WTC11 (cell line): ENCODE measurements at regions of chr1 and their contacts with region 1.

Region 1: DNA sequence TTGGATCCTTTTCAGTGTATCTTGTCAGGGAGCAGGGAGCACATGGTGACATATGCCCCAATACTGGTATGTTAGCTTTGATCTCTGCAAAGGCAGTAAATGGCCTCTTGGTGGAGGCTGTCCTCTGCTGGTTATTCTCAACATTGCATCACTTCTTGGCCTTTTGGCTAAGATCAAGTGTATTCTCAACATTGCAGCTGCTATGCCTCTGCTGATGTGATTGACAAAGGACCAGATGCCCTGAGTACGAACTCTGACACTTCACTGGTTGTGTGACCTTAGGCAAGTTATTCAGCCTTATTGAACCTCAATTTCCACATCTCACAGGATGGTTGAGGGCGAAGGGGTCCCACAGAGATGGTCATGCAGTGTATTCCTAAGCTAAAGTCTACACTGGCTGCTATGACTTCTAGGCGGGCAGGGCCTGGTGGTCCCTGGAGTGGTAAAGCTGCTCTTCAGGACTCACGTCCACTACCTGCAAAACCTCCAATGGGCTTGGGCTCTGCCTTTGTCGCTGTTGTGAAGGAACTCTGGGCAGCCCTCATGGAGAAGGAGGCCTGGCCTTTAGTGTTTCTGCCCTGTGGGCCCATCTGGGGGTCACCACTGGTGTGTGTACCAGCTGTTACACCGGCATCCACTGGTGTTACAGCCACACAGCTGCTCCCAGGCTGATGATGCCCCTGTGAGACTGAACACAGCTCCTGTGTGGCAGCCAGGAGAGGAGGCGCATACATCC is 64.8 kb downstream of the DNTTIP2 start:
- DNase-seq: peak; percentile 65
- ATAC-seq: peak; percentile 75
- H3K4me3 Mint-ChIP-seq: no peak overlapping the region
- H3K27ac Mint-ChIP-seq: no peak overlapping the region
- H3K4me1 Mint-ChIP-seq: peaks cover 57% of the 10 kb centered on the region
- H3K27me3 Mint-ChIP-seq: no peaks in the 10 kb centered on the region
- CTCF ChIP-seq: peak; percentile 65

Region 2: DNA sequence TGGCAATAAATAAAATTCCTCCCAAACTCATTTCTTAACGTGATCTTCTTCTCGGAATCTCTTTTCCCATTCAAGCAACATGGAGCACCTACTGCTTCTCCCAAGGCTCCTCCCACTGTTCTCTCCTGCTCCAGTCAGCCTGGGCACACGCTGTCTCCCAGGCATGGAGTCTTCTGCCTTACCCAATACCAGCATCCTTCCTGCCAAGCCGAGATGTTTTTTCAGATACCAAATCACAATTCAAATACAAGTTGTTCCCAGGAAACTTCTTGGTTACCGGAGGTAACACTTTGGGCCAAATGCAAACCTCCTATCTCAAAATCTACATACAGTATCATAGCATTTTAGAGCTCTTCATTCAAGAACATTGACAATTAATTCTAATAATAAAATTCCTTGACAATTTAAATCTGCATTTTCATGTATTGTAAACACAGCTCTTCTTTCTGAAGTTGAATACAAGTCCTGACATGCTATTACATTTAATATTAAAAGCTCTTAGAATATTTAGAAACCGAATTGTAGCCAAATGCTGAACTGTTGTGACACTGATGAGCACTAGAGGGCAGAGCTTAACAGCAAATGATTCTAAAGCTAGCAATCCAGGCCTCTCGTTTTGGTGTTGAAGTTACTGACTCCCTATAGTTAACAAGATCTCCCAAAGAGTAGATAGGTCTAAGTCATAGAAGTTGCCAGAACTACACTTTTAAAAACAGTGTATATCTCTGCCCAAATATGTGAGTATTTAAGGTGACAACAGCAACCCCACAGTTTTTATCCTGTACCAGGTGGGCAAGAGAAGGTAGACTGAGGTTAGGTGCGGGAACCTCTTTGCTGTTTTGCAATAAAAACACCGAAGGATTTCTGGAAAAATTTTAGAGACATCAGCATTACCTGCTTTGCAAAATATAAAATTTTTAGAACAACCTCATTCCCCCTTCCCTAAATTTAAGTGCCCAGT is 184.8 kb before region 1 on chr1:
- CTCF ChIA-PET with region 1: interaction called, 240 read pairs
- POLR2A ChIA-PET with region 1: interaction called, 5 read pairs
- DNase-seq: no peak
- ATAC-seq: peak; percentile 76
- H3K4me3 Mint-ChIP-seq: no peak overlapping the region
- H3K27ac Mint-ChIP-seq: peak overlapping the region; percentile 47; the same call in 1 of the 2 replicates
- H3K4me1 Mint-ChIP-seq: peaks cover 7% of the 10 kb centered on the region; the same call in 1 of the 2 replicates
- H3K27me3 Mint-ChIP-seq: no peaks in the 10 kb centered on the region
- CTCF ChIP-seq: peak; percentile 62

Region 3: GRCh38 chr1:93680757-93681550 is 133.3 kb before region 1 on chr1:
- CTCF ChIA-PET with region 1: interaction called, 26 read pairs
- POLR2A ChIA-PET with region 1: no interaction called
- DNase-seq: peak; percentile 89
- ATAC-seq: peak; percentile 90
- H3K4me3 Mint-ChIP-seq: peak overlapping the region; percentile 94
- H3K27ac Mint-ChIP-seq: peak overlapping the region; percentile 95
- H3K4me1 Mint-ChIP-seq: peaks cover 36% of the 10 kb centered on the region
- H3K27me3 Mint-ChIP-seq: peaks cover 32% of the 10 kb centered on the region
- CTCF ChIP-seq: no peak

Region 4: GRCh38 chr1:93704052-93704451 is 110.2 kb before region 1 on chr1:
- CTCF ChIA-PET with region 1: interaction called, 16 read pairs
- POLR2A ChIA-PET with region 1: no interaction called
- DNase-seq: no peak
- ATAC-seq: no peak
- H3K4me3 Mint-ChIP-seq: no peak overlapping the region
- H3K27ac Mint-ChIP-seq: no peak overlapping the region
- H3K4me1 Mint-ChIP-seq: peaks cover 17% of the 10 kb centered on the region
- H3K27me3 Mint-ChIP-seq: no peaks in the 10 kb centered on the region
- CTCF ChIP-seq: no peak

Region 5: GRCh38 chr1:93749894-93750301 is 64.3 kb before region 1 on chr1:
- CTCF ChIA-PET with region 1: interaction called, 26 read pairs
- POLR2A ChIA-PET with region 1: no interaction called
- DNase-seq: peak; percentile 41
- ATAC-seq: peak; percentile 73
- H3K4me3 Mint-ChIP-seq: no peak overlapping the region
- H3K27ac Mint-ChIP-seq: peak overlapping the region; percentile 26
- H3K4me1 Mint-ChIP-seq: peaks cover 4% of the 10 kb centered on the region
- H3K27me3 Mint-ChIP-seq: peaks cover 5% of the 10 kb centered on the region; the same call in 1 of the 2 replicates
- CTCF ChIP-seq: no peak

Region 6: DNA sequence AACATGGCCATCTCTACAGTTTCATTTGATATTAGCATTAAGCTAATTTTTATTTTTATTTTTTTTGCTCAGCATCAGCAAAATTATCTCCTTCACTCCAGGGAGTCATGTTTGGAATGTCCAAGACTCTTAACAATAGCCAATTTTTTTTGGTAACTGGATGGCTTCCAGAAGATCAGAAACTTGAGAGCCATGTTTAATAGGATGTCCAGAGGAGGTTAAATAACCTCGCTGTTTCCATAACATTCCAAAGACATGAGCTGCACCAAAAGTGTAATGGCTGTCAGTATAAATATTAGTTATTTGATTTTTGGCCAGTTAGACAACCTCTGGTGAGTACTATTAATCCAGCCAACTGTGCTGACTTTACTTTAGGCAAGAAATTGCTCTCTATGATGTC is 15.9 kb before region 1 on chr1:
- CTCF ChIA-PET with region 1: interaction called, 14 read pairs
- POLR2A ChIA-PET with region 1: no interaction called
- DNase-seq: no peak
- ATAC-seq: no peak
- H3K4me3 Mint-ChIP-seq: no peak overlapping the region
- H3K27ac Mint-ChIP-seq: no peak overlapping the region
- H3K4me1 Mint-ChIP-seq: peaks cover 9% of the 10 kb centered on the region; the same call in 1 of the 2 replicates
- H3K27me3 Mint-ChIP-seq: no peaks in the 10 kb centered on the region; the same call in 1 of the 2 replicates
- CTCF ChIP-seq: no peak

Region 7: DNA sequence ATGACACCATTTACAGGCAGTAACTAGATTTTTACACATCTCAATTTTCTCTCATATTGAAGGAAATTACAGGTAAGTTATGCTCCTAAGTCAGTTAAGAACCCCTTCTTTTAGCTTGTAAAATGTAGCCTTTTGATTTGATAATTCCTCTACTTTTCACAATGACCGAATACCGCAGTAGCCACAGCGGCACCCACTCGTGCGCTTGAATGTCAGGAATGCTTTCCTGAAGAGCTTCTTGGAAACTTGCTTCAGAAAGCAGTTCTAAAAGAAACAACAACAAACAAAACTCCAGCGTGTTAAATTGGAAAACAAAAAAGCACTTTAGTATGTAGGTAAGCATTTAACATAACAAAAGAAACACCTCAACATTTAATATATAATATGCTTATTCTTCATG is 74.7 kb after region 1 on chr1:
- CTCF ChIA-PET with region 1: no interaction called
- POLR2A ChIA-PET with region 1: no interaction called
- DNase-seq: no peak
- ATAC-seq: peak; percentile 39
- H3K4me3 Mint-ChIP-seq: peak overlapping the region; percentile 6; the same call in 1 of the 2 replicates
- H3K27ac Mint-ChIP-seq: peak overlapping the region; percentile 84
- H3K4me1 Mint-ChIP-seq: peaks cover 17% of the 10 kb centered on the region
- H3K27me3 Mint-ChIP-seq: no peaks in the 10 kb centered on the region
- CTCF ChIP-seq: no peak

Region 8: GRCh38 chr1:93988634-93989350 is 174.6 kb after region 1 on chr1:
- CTCF ChIA-PET with region 1: no interaction called
- POLR2A ChIA-PET with region 1: no interaction called
- DNase-seq: no peak
- ATAC-seq: no peak
- H3K4me3 Mint-ChIP-seq: no peak overlapping the region
- H3K27ac Mint-ChIP-seq: no peak overlapping the region
- H3K4me1 Mint-ChIP-seq: peaks cover 14% of the 10 kb centered on the region
- H3K27me3 Mint-ChIP-seq: no peaks in the 10 kb centered on the region; the same call in 1 of the 2 replicates
- CTCF ChIP-seq: no peak

Region 9: GRCh38 chr1:94180650-94181049 is 366.4 kb after region 1 on chr1:
- CTCF ChIA-PET with region 1: no interaction called
- POLR2A ChIA-PET with region 1: no interaction called
- DNase-seq: no peak
- ATAC-seq: no peak
- H3K4me3 Mint-ChIP-seq: no peak overlapping the region
- H3K27ac Mint-ChIP-seq: no peak overlapping the region
- H3K4me1 Mint-ChIP-seq: no peaks in the 10 kb centered on the region
- H3K27me3 Mint-ChIP-seq: no peaks in the 10 kb centered on the region
- CTCF ChIP-seq: no peak

Region 10: GRCh38 chr1:94572780-94573179 is 758.6 kb after region 1 on chr1:
- CTCF ChIA-PET with region 1: no interaction called
- POLR2A ChIA-PET with region 1: no interaction called
- DNase-seq: no peak
- ATAC-seq: no peak
- H3K4me3 Mint-ChIP-seq: no peak overlapping the region
- H3K27ac Mint-ChIP-seq: no peak overlapping the region
- H3K4me1 Mint-ChIP-seq: no peaks in the 10 kb centered on the region
- H3K27me3 Mint-ChIP-seq: peaks cover 3% of the 10 kb centered on the region; the same call in 1 of the 2 replicates
- CTCF ChIP-seq: no peak